HEK293 (cell line): ENCODE measurements at regions of chr9 and their contacts with region 1.

Region 1: DNA sequence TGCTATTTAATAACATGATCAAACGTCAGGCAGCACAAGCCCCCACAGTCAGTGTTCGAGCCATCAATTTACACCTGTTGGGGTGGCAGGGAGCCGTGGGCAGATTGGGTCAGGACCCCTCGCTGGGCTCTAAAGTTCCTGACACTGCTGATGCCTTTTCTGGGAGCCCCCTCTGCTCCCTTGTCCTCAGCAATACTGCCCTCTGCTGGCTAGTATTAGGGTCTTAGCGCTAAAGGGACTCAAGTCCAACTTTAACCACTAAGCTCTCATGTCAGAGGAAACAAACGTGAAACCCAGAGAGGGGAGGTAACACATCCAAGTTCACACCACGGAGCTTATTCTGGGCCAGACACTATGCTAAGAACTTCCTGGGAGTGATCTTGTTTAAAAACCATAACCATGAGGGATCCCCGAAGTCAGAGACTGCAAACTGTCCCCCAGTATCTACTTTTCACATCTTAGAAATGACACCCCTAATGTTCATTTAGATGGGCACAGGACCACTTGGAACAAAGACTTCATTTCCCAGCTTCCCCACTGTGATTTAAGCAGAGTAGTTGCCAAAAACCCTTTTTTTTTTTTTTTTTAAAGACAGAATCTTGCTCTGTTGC is 20.4 kb downstream of the ANKS6 start:
- H3K4me3 ChIP-seq: no peak overlapping the region
- H3K27ac ChIP-seq: no peak overlapping the region
- H3K4me1 ChIP-seq: no peaks in the 10 kb centered on the region
- CTCF ChIP-seq: peak; percentile 11; the same call in 1 of the 2 replicates

Region 2: GRCh38 chr9:98315551-98316060 is 460.3 kb before region 1 on chr9:
- CTCF ChIA-PET with region 1: interaction called, 80 read pairs
- POLR2A ChIA-PET with region 1: no interaction called
- H3K4me3 ChIP-seq: no peak overlapping the region
- H3K27ac ChIP-seq: no peak overlapping the region
- H3K4me1 ChIP-seq: no peaks in the 10 kb centered on the region
- CTCF ChIP-seq: peak; percentile 87

Region 3: GRCh38 chr9:98724810-98725530 is 51.0 kb before region 1 on chr9:
- CTCF ChIA-PET with region 1: interaction called, 12 read pairs
- POLR2A ChIA-PET with region 1: no interaction called
- H3K4me3 ChIP-seq: no peak overlapping the region
- H3K27ac ChIP-seq: no peak overlapping the region
- H3K4me1 ChIP-seq: no peaks in the 10 kb centered on the region
- CTCF ChIP-seq: no peak

Region 4: DNA sequence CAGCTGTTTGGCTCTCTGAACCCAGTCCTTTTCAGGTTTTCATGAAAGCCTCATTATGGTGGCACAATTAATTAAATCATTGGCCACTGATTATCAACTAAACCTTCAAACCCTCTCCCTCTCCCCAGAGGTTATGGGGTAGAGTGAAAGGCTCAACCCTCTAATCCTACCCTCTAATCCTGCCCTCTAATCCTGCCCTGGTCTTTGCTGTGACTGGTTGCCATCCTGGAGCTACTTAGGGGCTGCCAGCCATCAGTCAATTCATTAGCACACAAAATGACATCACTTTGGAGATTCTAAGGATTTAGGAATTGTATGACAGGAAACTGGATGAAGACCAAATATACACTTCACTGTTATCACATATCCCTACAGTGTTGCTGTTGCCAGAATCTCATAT is 15.7 kb before region 1 on chr9:
- CTCF ChIA-PET with region 1: interaction called, 57 read pairs
- POLR2A ChIA-PET with region 1: no interaction called
- H3K4me3 ChIP-seq: no peak overlapping the region
- H3K27ac ChIP-seq: no peak overlapping the region
- H3K4me1 ChIP-seq: no peaks in the 10 kb centered on the region
- CTCF ChIP-seq: no peak

Region 5: GRCh38 chr9:98791147-98792095 is 15.5 kb after region 1 on chr9:
- CTCF ChIA-PET with region 1: interaction called, 39 read pairs
- POLR2A ChIA-PET with region 1: no interaction called
- H3K4me3 ChIP-seq: no peak overlapping the region
- H3K27ac ChIP-seq: no peak overlapping the region
- H3K4me1 ChIP-seq: no peaks in the 10 kb centered on the region
- CTCF ChIP-seq: peak; percentile 78

Region 6: GRCh38 chr9:98807070-98807810 is 31.3 kb after region 1 on chr9 and contains the start of gene GALNT12:
- CTCF ChIA-PET with region 1: interaction called, 16 read pairs
- POLR2A ChIA-PET with region 1: no interaction called
- H3K4me3 ChIP-seq: peak within 1 kb of the TSS; percentile 46
- H3K27ac ChIP-seq: peak within 1 kb of the TSS; percentile 9; the same call in 1 of the 2 replicates
- H3K4me1 ChIP-seq: no peaks in the 10 kb centered on the region
- CTCF ChIP-seq: no peak

Region 7: GRCh38 chr9:99085949-99086948 is 310.3 kb after region 1 on chr9:
- CTCF ChIA-PET with region 1: no interaction called
- POLR2A ChIA-PET with region 1: no interaction called
- H3K4me3 ChIP-seq: no peak overlapping the region
- H3K27ac ChIP-seq: no peak overlapping the region
- H3K4me1 ChIP-seq: no peaks in the 10 kb centered on the region
- CTCF ChIP-seq: no peak